ENCODE measurements at regions of chr19 and their contacts with region 1.

Region 1: DNA sequence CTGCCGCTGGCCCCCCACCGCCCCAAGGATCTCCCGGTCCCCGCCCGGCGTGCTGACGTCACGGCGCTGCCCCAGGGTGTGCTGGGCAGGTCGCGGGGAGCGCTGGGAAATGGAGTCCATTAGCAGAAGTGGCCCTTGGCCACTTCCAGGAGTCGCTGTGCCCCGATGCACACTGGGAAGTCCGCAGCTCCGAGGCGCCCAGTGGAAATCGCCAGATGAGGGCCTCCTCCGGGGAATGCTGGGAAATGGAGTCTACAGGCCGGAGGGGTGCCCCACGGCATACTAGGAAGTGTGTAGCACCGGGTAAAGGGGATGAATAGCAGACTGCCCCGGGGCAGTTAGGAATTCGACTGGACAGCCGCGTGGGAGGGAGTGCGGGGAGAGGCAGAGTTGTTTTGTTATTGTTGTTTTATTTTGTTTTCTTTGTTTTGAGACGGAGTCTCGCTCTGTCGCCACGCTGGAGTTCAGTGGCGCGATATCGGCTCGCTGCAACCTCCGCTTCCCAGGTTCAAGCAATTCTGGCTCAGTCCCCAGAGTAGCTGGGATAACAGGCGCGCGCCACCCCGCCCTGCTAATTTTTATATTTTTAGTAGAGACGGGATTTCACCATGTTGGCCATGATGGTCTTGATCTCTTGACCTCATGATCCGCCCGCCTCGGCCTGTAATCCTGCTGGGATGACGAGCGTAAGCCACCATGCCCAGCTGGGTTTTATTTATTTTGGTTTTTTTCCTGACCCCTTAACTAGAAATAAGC is at the start of gene PPP1R12C:
- DNase-seq: peak; percentile 98
- ATAC-seq: peak; percentile 78
- H3K4me3 Mint-ChIP-seq: peak within 1 kb of the TSS; percentile 98
- H3K27ac Mint-ChIP-seq: peak within 1 kb of the TSS; percentile 97
- H3K4me1 Mint-ChIP-seq: peaks cover 31% of the 10 kb centered on the region
- H3K27me3 Mint-ChIP-seq: peaks cover 21% of the 10 kb centered on the region
- CTCF ChIP-seq: no peak
- total RNA-seq, gene PPP1R12C: 88.4 to 99.3 TPM (median 92.3 TPM) in 3 replicates

Region 2: GRCh38 chr19:55062734-55063492 is 54.9 kb before region 1 on chr19 and contains the start of gene RDH13:
- CTCF ChIA-PET with region 1: no interaction called
- POLR2A ChIA-PET with region 1: no interaction called
- DNase-seq: peak; percentile 99
- ATAC-seq: peak; percentile 98
- H3K4me3 Mint-ChIP-seq: peak within 1 kb of the TSS; percentile 97
- H3K27ac Mint-ChIP-seq: no peak within 1 kb of the TSS
- H3K4me1 Mint-ChIP-seq: peaks cover 17% of the 10 kb centered on the region
- H3K27me3 Mint-ChIP-seq: peaks cover 46% of the 10 kb centered on the region
- CTCF ChIP-seq: no peak
- total RNA-seq, gene RDH13: 35.3 to 39.5 TPM (median 38.4 TPM) in 3 replicates

Region 3: GRCh38 chr19:55132453-55133129 is 14.8 kb after region 1 on chr19:
- CTCF ChIA-PET with region 1: interaction called, 13 read pairs
- POLR2A ChIA-PET with region 1: interaction called, 3 read pairs
- DNase-seq: no peak
- ATAC-seq: peak; percentile 66
- H3K4me3 Mint-ChIP-seq: no peak overlapping the region
- H3K27ac Mint-ChIP-seq: 0 out of 2 replicates have a peak overlapping the region, but pooled peaks have one; percentile 22
- H3K4me1 Mint-ChIP-seq: peaks cover 23% of the 10 kb centered on the region
- H3K27me3 Mint-ChIP-seq: peaks cover 4% of the 10 kb centered on the region
- CTCF ChIP-seq: no peak

Measured in WTC11 (cell line).